ENCODE measurements at regions of chr10 and their contacts with region 1.

Region 1: DNA sequence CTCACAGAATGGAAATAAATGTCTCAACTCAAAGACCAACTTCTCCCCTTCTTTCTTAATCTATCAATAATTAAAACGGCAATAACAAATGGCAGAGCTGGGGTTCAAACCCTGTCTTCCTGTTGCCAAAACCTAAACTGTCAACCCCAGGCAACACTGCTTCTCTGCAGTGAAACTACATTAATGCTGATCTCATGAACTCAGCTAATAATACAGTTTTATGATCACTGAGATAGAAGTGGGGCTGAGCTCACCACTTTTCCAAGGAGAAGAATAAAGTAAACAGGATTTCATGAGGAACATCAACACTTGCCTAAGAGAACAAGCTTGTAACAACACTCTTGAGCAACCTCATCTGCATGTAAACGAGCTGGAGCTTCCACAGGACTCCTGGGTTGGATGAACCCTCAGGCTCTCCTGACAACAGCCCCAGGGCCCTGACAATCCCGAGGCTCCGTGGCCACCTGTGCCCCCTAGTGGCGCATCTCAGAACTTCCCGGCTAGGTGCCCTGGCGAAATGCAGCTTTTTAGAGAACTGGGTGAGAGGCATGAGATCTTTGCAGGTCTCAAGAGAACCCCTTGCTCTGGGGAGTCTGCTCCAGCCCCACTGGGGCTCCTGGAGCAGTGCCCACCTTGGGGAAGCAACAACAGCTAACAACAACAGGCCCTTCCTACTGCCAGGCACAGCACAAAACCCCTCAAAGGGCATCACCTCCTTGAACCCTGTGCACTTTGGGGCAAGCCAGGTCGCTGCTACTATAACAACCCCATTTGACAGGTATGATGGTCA is 169.3 kb downstream of the SH3PXD2A start:
- DNase-seq: peak; percentile 86
- H3K4me3 ChIP-seq: peak overlapping the region in 1 of 2 experiments; percentile 24; a peak in 1 of 4 replicates
- H3K27ac ChIP-seq: no peak overlapping the region
- H3K4me1 ChIP-seq: peaks cover 0 to 4% of the 10 kb centered on the region in 2 experiments; a peak in 1 of 4 replicates
- H3K27me3 ChIP-seq: no peaks in the 10 kb centered on the region
- CTCF ChIP-seq: peak; percentile 95
- EP300 ChIP-seq: no peak
- RAD21 ChIP-seq: peak; percentile 85

Region 2: GRCh38 chr10:103598654-103599115 is 87.4 kb before region 1 on chr10:
- CTCF ChIA-PET with region 1: interaction called, 129 read pairs
- POLR2A ChIA-PET with region 1: no interaction called
- DNase-seq: peak; percentile 88
- H3K4me3 ChIP-seq: no peak overlapping the region
- H3K27ac ChIP-seq: peak overlapping the region in 1 of 2 experiments; percentile 25; a peak in 1 of 4 replicates
- H3K4me1 ChIP-seq: peaks cover 0 to 10% of the 10 kb centered on the region in 2 experiments; a peak in 2 of 4 replicates
- H3K27me3 ChIP-seq: no peaks in the 10 kb centered on the region
- CTCF ChIP-seq: peak; percentile 80
- EP300 ChIP-seq: no peak
- RAD21 ChIP-seq: peak; percentile 93

Region 3: GRCh38 chr10:103618575-103619423 is 67.3 kb before region 1 on chr10:
- CTCF ChIA-PET with region 1: interaction called, 59 read pairs
- POLR2A ChIA-PET with region 1: interaction called, 4 read pairs
- DNase-seq: peak; percentile 95
- H3K4me3 ChIP-seq: no peak overlapping the region
- H3K27ac ChIP-seq: peak overlapping the region; percentile 50 to 99
- H3K4me1 ChIP-seq: peaks cover 6 to 94% of the 10 kb centered on the region in 2 experiments; a peak in 3 of 4 replicates
- H3K27me3 ChIP-seq: no peaks in the 10 kb centered on the region
- CTCF ChIP-seq: no peak
- EP300 ChIP-seq: peak in 1 of 2 experiments; percentile 98; a peak in 2 of 4 replicates
- RAD21 ChIP-seq: no peak; the same call in 1 of the 2 replicates

Region 4: GRCh38 chr10:103648921-103649532 is 37.0 kb before region 1 on chr10:
- CTCF ChIA-PET with region 1: interaction called, 16 read pairs
- POLR2A ChIA-PET with region 1: no interaction called
- DNase-seq: no peak
- H3K4me3 ChIP-seq: no peak overlapping the region
- H3K27ac ChIP-seq: peak overlapping the region in 1 of 2 experiments; percentile 64; a peak in 2 of 4 replicates
- H3K4me1 ChIP-seq: peaks cover 6 to 29% of the 10 kb centered on the region in 2 experiments; a peak in 2 of 4 replicates
- H3K27me3 ChIP-seq: no peaks in the 10 kb centered on the region
- CTCF ChIP-seq: no peak
- EP300 ChIP-seq: peak in 1 of 2 experiments; percentile 42; a peak in 1 of 4 replicates
- RAD21 ChIP-seq: no peak

Region 5: DNA sequence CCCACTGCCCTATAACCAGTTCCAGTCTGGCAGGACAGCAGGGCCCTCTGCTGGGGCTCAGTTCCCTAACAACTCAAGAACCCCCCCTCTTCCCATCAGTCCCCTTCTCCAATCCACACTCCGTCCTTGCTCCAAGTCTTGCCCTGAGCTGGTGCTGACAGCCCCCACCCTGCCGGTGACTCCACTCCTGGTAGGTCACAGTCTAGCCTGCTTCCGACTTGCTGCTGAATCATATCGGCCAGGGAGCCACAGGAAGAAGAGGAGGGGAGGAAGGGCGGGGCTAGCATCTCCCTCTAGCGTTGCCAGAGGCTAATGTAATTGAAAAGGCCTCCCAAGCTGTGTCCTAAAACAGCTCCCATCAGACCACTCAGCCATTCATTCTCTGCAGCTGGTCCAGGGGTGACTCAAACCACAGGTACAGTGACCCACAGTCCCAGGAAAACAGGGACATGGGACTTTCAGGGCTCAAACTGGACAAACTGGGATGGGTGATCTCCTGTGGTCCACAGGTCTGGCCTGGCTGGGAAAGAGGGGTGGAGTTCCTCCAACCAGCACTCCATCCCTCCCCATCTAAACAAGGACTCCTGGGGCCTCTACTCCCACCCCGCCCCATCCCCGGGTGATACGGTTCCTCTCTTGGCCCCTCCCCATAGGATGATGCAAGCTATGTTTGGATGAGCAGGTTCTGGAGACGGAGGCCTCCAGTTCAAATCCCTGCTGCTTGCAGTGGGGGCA is 10.5 kb after region 1 on chr10:
- CTCF ChIA-PET with region 1: interaction called, 50 read pairs
- POLR2A ChIA-PET with region 1: no interaction called
- DNase-seq: peak; percentile 46
- H3K4me3 ChIP-seq: no peak overlapping the region
- H3K27ac ChIP-seq: peak overlapping the region in 1 of 2 experiments; percentile 73; a peak in 2 of 4 replicates
- H3K4me1 ChIP-seq: peaks cover 9 to 14% of the 10 kb centered on the region in 2 experiments; a peak in 3 of 4 replicates
- H3K27me3 ChIP-seq: no peaks in the 10 kb centered on the region
- CTCF ChIP-seq: peak; percentile 58
- EP300 ChIP-seq: peak in 1 of 2 experiments; percentile 43; a peak in 1 of 4 replicates
- RAD21 ChIP-seq: no peak

Region 6: GRCh38 chr10:103888113-103888841 is 202.2 kb after region 1 on chr10:
- CTCF ChIA-PET with region 1: interaction called, 10 read pairs
- POLR2A ChIA-PET with region 1: no interaction called
- DNase-seq: peak; percentile 51
- H3K4me3 ChIP-seq: peak overlapping the region in 1 of 2 experiments; percentile 0; a peak in 1 of 4 replicates
- H3K27ac ChIP-seq: peak overlapping the region; percentile 43 to 70
- H3K4me1 ChIP-seq: peaks cover 8 to 18% of the 10 kb centered on the region in 2 experiments; a peak in 2 of 4 replicates
- H3K27me3 ChIP-seq: no peaks in the 10 kb centered on the region
- CTCF ChIP-seq: peak; percentile 94
- EP300 ChIP-seq: no peak
- RAD21 ChIP-seq: peak; percentile 95

Measured in SK-N-SH (cell line).